ENCODE measurements at regions of chr5 and their contacts with region 1.

Region 1: DNA sequence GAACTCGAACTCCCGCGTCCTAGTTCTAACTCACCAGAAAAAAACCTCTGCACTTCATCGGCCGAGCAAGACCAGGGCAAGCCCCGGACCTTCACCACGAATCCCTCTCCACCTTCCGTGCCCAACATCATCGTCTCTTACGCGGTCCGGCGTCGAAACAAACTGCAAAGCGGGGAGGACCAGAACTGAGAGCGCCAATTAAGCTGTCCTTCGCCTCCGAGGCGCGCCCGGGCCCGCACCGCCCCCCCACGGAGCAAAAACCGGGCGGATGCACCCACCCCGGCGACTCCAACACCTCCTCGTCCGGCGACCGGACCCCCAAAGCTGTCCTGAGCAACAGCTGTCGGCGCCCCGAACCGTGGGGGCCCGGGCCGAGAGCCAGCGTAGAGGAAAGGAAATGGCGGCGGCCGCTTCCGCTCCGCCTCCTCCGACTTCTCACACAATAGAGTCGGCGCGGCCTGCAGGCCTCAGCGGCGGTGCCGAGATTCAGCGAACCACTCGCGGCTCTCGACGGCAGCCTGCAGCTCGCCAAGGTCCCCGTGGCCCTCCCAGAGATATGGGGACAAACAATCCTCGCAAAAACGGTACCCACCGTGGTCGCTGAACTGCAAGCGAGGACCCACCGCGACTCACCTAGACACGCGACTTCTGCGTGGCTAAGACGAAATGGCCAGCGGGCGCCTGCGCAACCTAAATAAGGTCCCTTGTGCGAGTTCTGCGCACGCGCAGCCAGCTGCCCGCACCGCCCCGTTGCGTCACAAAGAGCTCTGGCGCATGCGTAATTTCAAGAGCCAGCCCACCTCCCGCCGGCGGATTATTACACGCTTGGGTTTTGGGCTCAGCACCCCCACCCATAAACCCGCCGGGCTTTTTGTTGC is at the start of gene HNRNPH1:
- DNase-seq: peak; percentile 97
- ATAC-seq: peak; percentile 62
- H3K4me3 ChIP-seq: peak within 1 kb of the TSS; percentile 96 to 99 (median 97)
- H3K27ac ChIP-seq: peak within 1 kb of the TSS; percentile 97
- H3K4me1 ChIP-seq: peaks cover 51% of the 10 kb centered on the region
- H3K27me3 ChIP-seq: no peaks in the 10 kb centered on the region; a peak in 1 of 5 replicates
- CTCF ChIP-seq: peak; percentile 2
- EP300 ChIP-seq: no peak
- POLR2A ChIP-seq: peak; percentile 100
- RAD21 ChIP-seq: peak; percentile 46
- total RNA-seq, gene HNRNPH1: 807 and 1,064 TPM in 2 replicates

Region 2: DNA sequence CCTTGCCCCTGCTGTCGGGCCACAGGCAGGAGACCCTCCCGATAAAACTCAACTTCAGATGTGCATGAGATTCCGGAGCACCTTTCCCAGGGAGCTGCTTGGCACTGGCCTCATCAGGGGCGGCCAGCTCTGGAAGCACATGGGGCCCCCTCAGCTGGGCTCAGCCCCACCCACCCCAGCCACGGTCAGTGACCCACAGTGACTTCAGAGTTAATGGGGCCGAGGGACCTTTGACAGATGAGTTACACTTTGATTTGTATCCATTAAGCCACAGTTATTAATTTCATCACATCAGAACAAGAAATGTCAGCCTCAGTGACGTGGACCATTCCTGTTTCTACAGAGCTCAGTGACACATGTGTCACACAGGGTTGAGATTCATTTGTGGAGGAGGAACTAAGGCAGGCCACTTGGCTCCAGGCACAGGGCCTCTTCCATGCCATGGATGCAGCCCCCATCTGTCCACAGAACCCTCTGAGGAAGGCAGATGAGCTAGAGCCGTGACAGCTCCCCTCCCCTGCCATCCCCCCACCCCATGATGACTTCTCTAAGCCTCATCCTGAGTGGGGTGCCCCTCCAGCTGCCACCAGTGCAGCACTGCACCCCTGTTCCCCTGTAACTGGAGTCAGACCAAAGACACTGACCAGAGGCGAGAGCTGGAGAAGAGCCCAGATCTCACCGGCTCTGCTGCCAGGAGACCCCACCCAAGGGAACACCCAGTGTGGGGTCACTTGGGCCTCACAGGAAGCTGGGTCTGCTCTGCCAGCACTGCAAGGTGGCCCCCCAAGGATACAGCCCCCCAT is 208.6 kb before region 1 on chr5:
- CTCF ChIA-PET with region 1: no interaction called
- POLR2A ChIA-PET with region 1: no interaction called
- in situ Hi-C with region 1: no loop called
- intact Hi-C with region 1: no loop called
- DNase-seq: no peak
- ATAC-seq: no peak
- H3K4me3 ChIP-seq: no peak overlapping the region
- H3K27ac ChIP-seq: no peak overlapping the region
- H3K4me1 ChIP-seq: no peaks in the 10 kb centered on the region
- H3K27me3 ChIP-seq: peaks cover 1 to 48% of the 10 kb centered on the region in 2 experiments; a peak in 4 of 5 replicates
- CTCF ChIP-seq: no peak
- EP300 ChIP-seq: no peak
- POLR2A ChIP-seq: no peak
- RAD21 ChIP-seq: no peak

Region 3: DNA sequence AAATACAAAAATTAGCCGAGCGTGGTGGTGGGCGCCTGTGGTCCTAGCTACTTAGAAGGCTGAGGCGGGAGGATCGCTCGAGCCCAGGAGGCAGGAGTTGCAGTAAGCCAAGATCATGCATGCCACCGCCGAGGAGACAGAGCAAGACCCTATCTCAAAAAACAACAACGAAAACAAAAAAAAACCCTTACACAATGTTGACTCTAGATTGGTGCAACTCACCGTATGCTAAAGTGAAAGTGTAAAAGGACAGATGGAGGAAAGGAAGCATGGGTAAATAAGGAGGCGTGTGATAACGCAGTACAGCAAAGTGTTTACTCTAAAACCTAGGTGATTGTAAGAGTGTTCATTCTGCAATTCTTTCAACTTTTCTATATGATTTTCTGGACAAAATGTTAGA is 88.8 kb before region 1 on chr5:
- CTCF ChIA-PET with region 1: no interaction called
- POLR2A ChIA-PET with region 1: interaction called, 11 read pairs
- in situ Hi-C with region 1: no loop called
- intact Hi-C with region 1: no loop called
- DNase-seq: peak; percentile 19
- ATAC-seq: peak; percentile 48
- H3K4me3 ChIP-seq: peak overlapping the region; percentile 31 to 46 (median 34)
- H3K27ac ChIP-seq: no peak overlapping the region
- H3K4me1 ChIP-seq: peaks cover 20% of the 10 kb centered on the region
- H3K27me3 ChIP-seq: peaks cover 0 to 2% of the 10 kb centered on the region in 2 experiments; a peak in 1 of 5 replicates
- CTCF ChIP-seq: no peak
- EP300 ChIP-seq: no peak
- POLR2A ChIP-seq: no peak
- RAD21 ChIP-seq: no peak

Region 4: GRCh38 chr5:179559284-179560252 is 63.7 kb before region 1 on chr5:
- CTCF ChIA-PET with region 1: no interaction called
- POLR2A ChIA-PET with region 1: interaction called, 23 read pairs
- in situ Hi-C with region 1: no loop called
- intact Hi-C with region 1: no loop called
- DNase-seq: peak; percentile 92
- ATAC-seq: peak; percentile 98
- H3K4me3 ChIP-seq: peak overlapping the region; percentile 63 to 76 (median 75)
- H3K27ac ChIP-seq: peak overlapping the region; percentile 79
- H3K4me1 ChIP-seq: peaks cover under 1% of the 10 kb centered on the region; the same call in 1 of the 2 replicates
- H3K27me3 ChIP-seq: no peaks in the 10 kb centered on the region
- CTCF ChIP-seq: no peak
- EP300 ChIP-seq: no peak
- POLR2A ChIP-seq: peak; percentile 42 to 80
- RAD21 ChIP-seq: no peak

Region 5: DNA sequence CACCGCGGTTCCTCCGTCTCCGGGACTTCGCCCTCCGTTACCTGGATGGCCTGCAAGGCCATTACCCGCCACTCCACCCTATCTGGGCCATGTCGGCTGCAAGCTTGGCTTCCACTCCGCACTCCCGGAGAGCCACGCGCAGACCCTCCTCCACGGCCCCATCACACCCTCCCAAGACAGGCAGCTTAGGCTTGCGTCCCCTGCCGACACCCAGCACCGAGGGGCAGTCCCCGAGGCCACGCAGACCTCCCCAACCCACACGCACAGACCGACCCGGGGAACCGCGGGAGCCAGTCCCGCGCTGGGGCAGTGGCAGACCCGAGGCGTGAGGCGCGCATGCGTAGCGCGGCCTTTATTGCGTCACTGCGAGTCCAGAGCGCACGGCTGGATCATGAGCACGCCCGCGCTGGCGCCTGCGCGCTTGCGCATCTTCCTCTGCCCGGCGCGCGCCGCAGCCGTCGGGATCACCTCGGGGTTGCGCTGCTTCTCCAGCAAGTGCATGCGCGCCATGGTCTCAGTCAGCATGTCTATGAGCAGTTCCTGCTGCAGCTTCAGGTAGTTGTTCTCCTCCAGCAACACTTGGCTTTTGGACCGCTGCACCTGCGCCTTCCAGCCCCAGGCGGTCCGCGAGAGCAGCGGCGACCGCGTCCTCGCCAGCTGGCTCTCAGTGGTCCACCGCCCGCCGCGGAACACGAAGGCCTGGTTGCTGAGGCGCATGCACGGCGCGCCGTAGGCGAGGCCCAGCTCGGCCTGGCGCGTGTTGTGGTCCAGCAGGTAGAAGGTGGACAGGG is 55.2 kb after region 1 on chr5:
- CTCF ChIA-PET with region 1: no interaction called
- POLR2A ChIA-PET with region 1: interaction called, 55 read pairs
- in situ Hi-C with region 1: no loop called
- intact Hi-C with region 1: no loop called
- DNase-seq: peak; percentile 90
- ATAC-seq: peak; percentile 83
- H3K4me3 ChIP-seq: peak overlapping the region; percentile 69 to 91 (median 81)
- H3K27ac ChIP-seq: peak overlapping the region; percentile 87
- H3K4me1 ChIP-seq: peaks cover 63% of the 10 kb centered on the region
- H3K27me3 ChIP-seq: no peaks in the 10 kb centered on the region; a peak in 1 of 5 replicates
- CTCF ChIP-seq: peak; percentile 68
- EP300 ChIP-seq: peak in 1 of 2 experiments; percentile 35; a peak in 1 of 4 replicates
- POLR2A ChIP-seq: peak in 1 of 2 experiments; percentile 93; a peak in 2 of 4 replicates
- RAD21 ChIP-seq: peak; percentile 64

Region 6: DNA sequence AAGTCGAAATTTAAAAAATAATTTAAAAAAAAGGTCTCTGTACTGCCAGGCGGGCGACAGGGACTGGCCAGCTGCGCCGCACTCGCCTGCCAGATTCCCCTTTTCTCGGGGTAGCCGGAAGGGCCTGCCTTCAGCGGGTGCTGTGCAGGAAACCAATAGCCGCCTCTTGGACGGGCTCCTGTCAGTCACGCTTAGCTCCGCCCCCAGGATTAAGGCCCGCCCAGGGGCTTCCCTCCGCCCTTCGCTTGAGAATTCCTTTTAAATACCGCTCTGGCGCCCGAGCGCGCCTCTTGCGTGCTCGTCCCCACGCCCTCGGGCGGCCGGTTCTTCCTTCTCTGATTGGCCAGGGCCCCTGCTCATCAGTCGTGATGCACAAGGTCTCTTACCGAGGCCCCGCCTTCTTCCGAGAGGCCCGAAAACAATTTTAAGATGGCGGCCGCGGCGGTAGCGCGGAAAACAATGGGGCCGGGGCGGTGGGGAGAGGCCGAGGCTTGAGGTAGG is 109.2 kb after region 1 on chr5 and contains the start of gene MAML1:
- CTCF ChIA-PET with region 1: no interaction called
- POLR2A ChIA-PET with region 1: interaction called, 25 read pairs
- in situ Hi-C with region 1: no loop called
- intact Hi-C with region 1: no loop called
- DNase-seq: peak; percentile 99
- ATAC-seq: peak; percentile 94
- H3K4me3 ChIP-seq: peak within 1 kb of the TSS; percentile 93 to 98 (median 96)
- H3K27ac ChIP-seq: peak within 1 kb of the TSS; percentile 88
- H3K4me1 ChIP-seq: peaks cover 55% of the 10 kb centered on the region
- H3K27me3 ChIP-seq: no peaks in the 10 kb centered on the region
- CTCF ChIP-seq: no peak
- EP300 ChIP-seq: no peak
- POLR2A ChIP-seq: peak; percentile 51 to 61
- RAD21 ChIP-seq: no peak
- total RNA-seq, gene MAML1: 10.0 and 12.1 TPM in 2 replicates

Region 7: GRCh38 chr5:179795863-179796833 is 172.9 kb after region 1 on chr5:
- CTCF ChIA-PET with region 1: no interaction called
- POLR2A ChIA-PET with region 1: interaction called, 11 read pairs
- in situ Hi-C with region 1: no loop called
- intact Hi-C with region 1: no loop called
- DNase-seq: peak; percentile 63
- ATAC-seq: peak; percentile 67
- H3K4me3 ChIP-seq: peak overlapping the region; percentile 58 to 78 (median 76)
- H3K27ac ChIP-seq: peak overlapping the region; percentile 77
- H3K4me1 ChIP-seq: peaks cover 39% of the 10 kb centered on the region
- H3K27me3 ChIP-seq: no peaks in the 10 kb centered on the region
- CTCF ChIP-seq: peak; percentile 71; the same call in 1 of the 2 replicates
- EP300 ChIP-seq: no peak
- POLR2A ChIP-seq: 0 out of 4 replicates have a peak, but pooled peaks of 1 of the 2 experiments have one; percentile 25
- RAD21 ChIP-seq: peak; percentile 94

Region 8: DNA sequence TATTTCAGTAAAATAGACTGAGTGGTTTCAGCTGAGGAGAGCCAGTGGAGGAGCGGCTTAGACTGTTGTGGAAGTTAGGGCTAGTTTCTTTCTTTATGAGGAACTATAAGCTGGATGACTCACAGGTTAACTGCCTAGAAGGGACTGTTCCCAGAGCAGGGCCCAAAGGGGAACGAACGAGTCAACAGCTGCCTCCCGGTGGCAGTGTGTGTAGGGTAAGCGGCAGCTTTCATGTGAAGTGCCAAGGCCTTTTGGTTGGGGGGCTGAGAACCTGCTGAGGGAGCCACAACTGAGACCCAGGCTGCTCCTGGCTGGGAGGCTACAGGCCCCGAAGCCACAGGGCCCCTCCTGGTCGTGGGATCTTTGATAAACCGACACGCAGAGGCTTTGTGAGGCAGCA is 204.4 kb after region 1 on chr5:
- CTCF ChIA-PET with region 1: no interaction called
- POLR2A ChIA-PET with region 1: interaction called, 12 read pairs
- in situ Hi-C with region 1: no loop called
- intact Hi-C with region 1: no loop called
- DNase-seq: no peak
- ATAC-seq: no peak
- H3K4me3 ChIP-seq: no peak overlapping the region
- H3K27ac ChIP-seq: peak overlapping the region; percentile 38
- H3K4me1 ChIP-seq: peaks cover 76% of the 10 kb centered on the region
- H3K27me3 ChIP-seq: no peaks in the 10 kb centered on the region
- CTCF ChIP-seq: 0 out of 2 replicates have a peak, but pooled peaks have one; percentile 7
- EP300 ChIP-seq: no peak
- POLR2A ChIP-seq: no peak; a peak in 1 of 4 replicates
- RAD21 ChIP-seq: no peak